Activated naive CD4-positive, alpha-beta T cell treated with anti-CD3 and anti-CD28 coated beads, Interleukin-2, amount 10 ng/mL, durations not matched to agents 7 days and 5 days (primary cell): ENCODE measurements at regions of chr6 and their contacts with region 1.

Region 1: DNA sequence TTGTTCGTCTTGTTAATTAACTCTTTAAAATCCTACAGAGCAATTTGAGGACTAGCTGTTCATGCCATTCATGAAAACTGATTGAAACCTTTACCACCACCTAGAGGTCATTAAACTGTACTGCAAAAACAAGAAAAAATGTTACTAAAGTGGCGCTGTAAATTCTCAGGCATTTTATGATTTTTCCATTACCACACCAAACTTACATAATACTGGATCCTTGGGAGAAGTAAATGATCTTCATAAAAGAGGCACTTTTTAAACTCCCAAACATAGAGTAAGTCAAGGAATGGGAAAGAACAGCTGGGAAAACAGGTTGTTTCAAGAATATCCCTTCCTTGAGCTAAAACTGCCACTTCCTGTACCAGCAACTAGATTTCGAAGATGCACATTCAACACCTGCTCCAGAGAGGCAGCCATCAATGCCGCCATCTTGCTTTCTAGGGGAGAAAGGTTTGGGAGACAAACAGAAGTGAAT is 54.3 kb downstream of the MYLIP start:
- DNase-seq: no peak
- H3K4me3 Mint-ChIP-seq: no peak overlapping the region
- H3K27ac Mint-ChIP-seq: no peak overlapping the region
- H3K4me1 Mint-ChIP-seq: peaks cover 41% of the 10 kb centered on the region
- H3K27me3 Mint-ChIP-seq: peaks cover 5% of the 10 kb centered on the region

Region 2: GRCh38 chr6:15691250-15691869 is 491.9 kb before region 1 on chr6:
- CTCF ChIA-PET with region 1: interaction called, 65 read pairs
- DNase-seq: peak; percentile 85
- H3K4me3 Mint-ChIP-seq: no peak overlapping the region
- H3K27ac Mint-ChIP-seq: no peak overlapping the region
- H3K4me1 Mint-ChIP-seq: peaks cover 10% of the 10 kb centered on the region
- H3K27me3 Mint-ChIP-seq: peaks cover 16% of the 10 kb centered on the region

Region 3: GRCh38 chr6:15879382-15880261 is 303.6 kb before region 1 on chr6:
- CTCF ChIA-PET with region 1: no interaction called
- DNase-seq: peak; percentile 44
- H3K4me3 Mint-ChIP-seq: no peak overlapping the region
- H3K27ac Mint-ChIP-seq: no peak overlapping the region
- H3K4me1 Mint-ChIP-seq: peaks cover 21% of the 10 kb centered on the region
- H3K27me3 Mint-ChIP-seq: peaks cover 5% of the 10 kb centered on the region

Region 4: DNA sequence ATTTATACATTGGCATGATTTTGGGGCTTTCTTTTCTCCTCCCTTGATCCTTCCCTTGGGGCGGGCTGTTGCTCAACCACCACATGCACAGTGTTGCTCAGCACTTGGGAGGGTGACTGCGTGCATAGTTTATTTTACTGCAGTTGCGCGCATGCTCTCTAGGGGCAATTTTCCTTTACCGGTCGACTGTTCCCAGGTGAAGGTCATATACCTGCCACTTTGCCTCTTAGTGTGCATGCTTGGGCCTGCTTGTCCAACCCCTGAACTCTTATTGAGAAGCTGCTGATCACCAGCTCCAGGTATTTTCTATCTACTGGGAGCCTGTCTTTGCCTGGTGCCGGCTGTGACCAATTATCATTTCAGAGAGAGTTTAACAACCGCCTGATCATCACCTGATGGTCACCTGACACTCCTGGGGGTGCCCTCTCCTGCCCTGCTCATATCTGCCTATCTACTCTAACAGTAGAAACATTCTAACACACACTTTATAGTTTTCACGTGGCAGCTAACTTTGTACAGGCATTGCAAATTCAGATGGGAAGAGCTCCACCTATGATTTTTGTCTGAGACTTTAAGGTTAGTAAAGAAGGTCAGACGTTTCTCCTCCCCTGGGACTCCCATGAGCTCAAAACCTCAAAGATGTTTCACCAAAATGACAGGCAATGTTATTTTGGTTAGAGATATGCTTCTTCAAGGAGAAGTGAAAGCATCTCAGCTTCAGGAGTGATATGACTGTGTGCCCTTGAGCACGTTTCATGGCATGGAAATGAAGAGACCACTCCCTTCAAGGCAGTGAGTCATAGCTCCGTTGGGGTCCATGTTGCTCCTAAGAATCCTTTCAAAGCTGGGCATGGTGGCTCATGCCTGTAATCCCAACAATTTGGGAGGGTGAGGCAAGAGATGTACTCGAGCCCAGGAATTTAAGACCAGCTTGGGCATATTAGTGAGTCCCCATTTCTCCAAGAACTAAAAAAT is 281.8 kb before region 1 on chr6:
- CTCF ChIA-PET with region 1: interaction called, 11 read pairs
- DNase-seq: peak; percentile 30
- H3K4me3 Mint-ChIP-seq: no peak overlapping the region
- H3K27ac Mint-ChIP-seq: peak overlapping the region; percentile 88
- H3K4me1 Mint-ChIP-seq: peaks cover 20% of the 10 kb centered on the region
- H3K27me3 Mint-ChIP-seq: peaks cover 3% of the 10 kb centered on the region

Region 5: DNA sequence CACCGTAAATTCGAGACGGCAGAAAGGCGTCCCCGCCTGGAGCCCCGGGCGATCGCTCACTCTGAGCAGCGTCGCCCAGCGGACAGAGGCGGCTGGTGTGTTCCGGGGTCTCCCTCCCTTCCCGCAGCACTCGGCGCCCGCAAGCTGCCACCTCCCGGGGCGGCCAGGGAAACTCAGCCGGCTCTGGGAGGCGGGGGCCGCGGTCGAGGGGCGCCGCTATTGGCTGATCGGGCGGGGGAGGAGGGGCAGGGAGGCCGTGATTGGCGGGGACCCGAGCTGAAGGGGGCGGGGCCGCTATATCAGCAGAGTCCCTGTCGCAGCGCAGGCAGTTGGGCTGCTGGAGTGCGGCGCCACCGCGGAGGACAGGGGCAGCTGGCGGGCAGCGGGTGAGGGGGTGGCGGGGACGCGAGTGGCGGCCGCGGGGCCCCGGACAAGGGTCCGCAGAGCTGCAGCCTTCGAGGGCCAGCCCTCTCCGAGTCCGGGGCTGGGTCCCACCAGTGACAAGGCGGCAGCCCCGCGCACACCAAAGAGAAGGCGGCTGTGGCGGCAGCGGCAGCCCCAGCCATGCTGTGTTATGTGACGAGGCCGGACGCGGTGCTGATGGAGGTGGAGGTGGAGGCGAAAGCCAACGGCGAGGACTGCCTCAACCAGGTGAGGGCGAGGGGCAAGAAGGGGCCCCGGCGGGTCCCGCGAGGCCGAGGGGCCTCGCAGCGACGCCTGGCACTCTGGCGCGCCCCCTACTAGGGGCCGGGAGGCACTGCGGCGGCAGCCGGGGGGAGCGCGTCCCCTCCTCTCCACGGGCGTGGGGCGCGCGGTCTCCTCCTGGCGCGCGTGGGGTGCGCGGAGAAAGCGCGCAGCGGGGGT is 54.2 kb before region 1 on chr6 and contains the start of gene MYLIP:
- CTCF ChIA-PET with region 1: interaction called, 71 read pairs
- DNase-seq: peak; percentile 97
- H3K4me3 Mint-ChIP-seq: peak within 1 kb of the TSS; percentile 84
- H3K27ac Mint-ChIP-seq: peak within 1 kb of the TSS; percentile 97
- H3K4me1 Mint-ChIP-seq: peaks cover 42% of the 10 kb centered on the region
- H3K27me3 Mint-ChIP-seq: peaks cover 34% of the 10 kb centered on the region

Region 6: DNA sequence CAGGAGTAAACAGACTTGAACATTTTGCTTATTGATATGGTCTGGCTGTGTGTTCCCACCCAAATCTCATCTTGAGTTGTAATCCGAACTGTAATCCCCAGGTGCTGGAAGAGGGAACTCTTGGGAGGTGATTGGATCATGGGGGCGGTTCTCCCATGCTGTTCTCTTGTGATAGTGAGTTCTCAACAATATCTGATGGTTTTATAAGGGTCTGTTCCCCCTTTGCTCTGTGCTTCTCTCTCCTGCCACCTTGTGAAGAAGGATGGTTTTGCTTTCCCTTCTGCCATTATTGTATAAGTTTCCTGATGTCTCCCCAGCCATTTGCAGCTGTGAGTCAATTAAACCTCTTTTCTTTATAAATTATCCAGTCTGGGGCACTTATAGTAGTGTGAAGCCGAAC is 14.4 kb before region 1 on chr6:
- CTCF ChIA-PET with region 1: interaction called, 11 read pairs
- DNase-seq: no peak
- H3K4me3 Mint-ChIP-seq: no peak overlapping the region
- H3K27ac Mint-ChIP-seq: no peak overlapping the region
- H3K4me1 Mint-ChIP-seq: peaks cover 14% of the 10 kb centered on the region
- H3K27me3 Mint-ChIP-seq: peaks cover 34% of the 10 kb centered on the region

Region 7: DNA sequence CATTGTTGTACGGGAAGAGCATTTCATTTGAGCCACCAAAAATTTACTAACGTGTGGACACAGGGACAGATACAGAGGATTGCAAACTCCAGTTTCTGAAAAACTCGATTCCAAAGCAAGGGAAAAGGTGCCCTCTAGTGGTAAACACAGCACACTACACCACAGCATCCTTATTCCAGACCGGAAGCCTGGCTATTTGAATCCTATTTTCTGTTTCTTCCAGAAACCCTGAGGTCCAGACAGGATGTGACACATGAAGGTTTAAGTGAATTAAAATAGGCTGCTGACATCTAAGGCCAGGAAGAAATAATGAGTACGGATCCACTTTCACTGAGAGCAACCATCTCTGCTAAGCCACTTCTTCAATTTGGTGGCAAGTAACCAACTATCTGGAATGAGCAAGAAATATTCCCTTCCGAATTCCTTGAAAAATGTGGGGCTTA is 23.4 kb after region 1 on chr6:
- CTCF ChIA-PET with region 1: interaction called, 10 read pairs
- DNase-seq: peak; percentile 59
- H3K4me3 Mint-ChIP-seq: no peak overlapping the region
- H3K27ac Mint-ChIP-seq: no peak overlapping the region
- H3K4me1 Mint-ChIP-seq: no peaks in the 10 kb centered on the region
- H3K27me3 Mint-ChIP-seq: peaks cover 26% of the 10 kb centered on the region